WTC11 (cell line): ENCODE measurements at regions of chr3 and their contacts with region 1.

Region 1: DNA sequence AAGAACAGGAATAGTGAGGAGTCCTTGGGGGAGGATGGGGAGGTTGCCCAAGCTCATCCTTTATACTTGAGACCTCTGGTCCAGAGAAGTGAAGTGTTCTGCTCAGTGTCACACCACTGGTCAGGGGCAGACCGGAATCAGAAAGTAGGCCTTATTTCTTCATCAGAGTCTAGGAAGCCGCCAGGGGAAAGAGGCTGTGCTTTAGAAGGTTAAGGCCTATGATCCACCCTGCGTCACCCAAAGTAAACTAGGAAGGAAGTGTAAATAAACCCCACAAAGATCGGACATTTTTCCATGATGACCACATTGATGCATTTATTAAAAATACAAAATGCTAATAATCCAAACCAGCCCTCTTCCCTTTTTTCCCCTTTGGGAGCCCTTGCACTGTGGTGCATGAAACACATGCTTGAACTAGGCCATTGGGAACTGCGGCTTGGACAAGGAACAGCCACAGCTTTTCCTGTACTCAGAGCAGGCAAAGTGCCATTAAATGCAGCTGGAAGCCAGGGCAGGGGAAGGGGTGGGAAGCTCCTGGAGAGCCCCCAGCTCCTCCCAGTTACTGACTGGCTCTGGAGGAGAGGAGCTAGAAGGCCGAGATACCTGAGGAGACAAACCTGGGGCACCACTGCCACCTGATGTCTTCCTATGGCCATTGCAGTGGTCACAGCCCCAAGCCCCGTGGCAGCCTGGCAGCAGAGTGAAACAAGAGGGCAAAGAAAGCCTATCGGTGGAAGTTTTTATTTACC is 37.0 kb downstream of the CDC25A start:
- DNase-seq: peak; percentile 90
- ATAC-seq: peak; percentile 99
- H3K4me3 Mint-ChIP-seq: no peak overlapping the region
- H3K27ac Mint-ChIP-seq: no peak overlapping the region
- H3K4me1 Mint-ChIP-seq: peaks cover 7% of the 10 kb centered on the region
- H3K27me3 Mint-ChIP-seq: no peaks in the 10 kb centered on the region
- CTCF ChIP-seq: peak; percentile 69

Region 2: GRCh38 chr3:47824541-47825473 is 326.4 kb before region 1 on chr3:
- CTCF ChIA-PET with region 1: interaction called, 23 read pairs
- POLR2A ChIA-PET with region 1: no interaction called
- DNase-seq: peak; percentile 82
- ATAC-seq: peak; percentile 99
- H3K4me3 Mint-ChIP-seq: peak overlapping the region; percentile 94
- H3K27ac Mint-ChIP-seq: peak overlapping the region; percentile 91
- H3K4me1 Mint-ChIP-seq: peaks cover 11% of the 10 kb centered on the region
- H3K27me3 Mint-ChIP-seq: no peaks in the 10 kb centered on the region
- CTCF ChIP-seq: peak; percentile 41; the same call in 1 of the 2 replicates

Region 3: GRCh38 chr3:47859956-47860605 is 291.2 kb before region 1 on chr3:
- CTCF ChIA-PET with region 1: interaction called, 30 read pairs
- POLR2A ChIA-PET with region 1: no interaction called
- DNase-seq: no peak
- ATAC-seq: no peak
- H3K4me3 Mint-ChIP-seq: no peak overlapping the region
- H3K27ac Mint-ChIP-seq: no peak overlapping the region
- H3K4me1 Mint-ChIP-seq: no peaks in the 10 kb centered on the region
- H3K27me3 Mint-ChIP-seq: no peaks in the 10 kb centered on the region
- CTCF ChIP-seq: no peak

Region 4: DNA sequence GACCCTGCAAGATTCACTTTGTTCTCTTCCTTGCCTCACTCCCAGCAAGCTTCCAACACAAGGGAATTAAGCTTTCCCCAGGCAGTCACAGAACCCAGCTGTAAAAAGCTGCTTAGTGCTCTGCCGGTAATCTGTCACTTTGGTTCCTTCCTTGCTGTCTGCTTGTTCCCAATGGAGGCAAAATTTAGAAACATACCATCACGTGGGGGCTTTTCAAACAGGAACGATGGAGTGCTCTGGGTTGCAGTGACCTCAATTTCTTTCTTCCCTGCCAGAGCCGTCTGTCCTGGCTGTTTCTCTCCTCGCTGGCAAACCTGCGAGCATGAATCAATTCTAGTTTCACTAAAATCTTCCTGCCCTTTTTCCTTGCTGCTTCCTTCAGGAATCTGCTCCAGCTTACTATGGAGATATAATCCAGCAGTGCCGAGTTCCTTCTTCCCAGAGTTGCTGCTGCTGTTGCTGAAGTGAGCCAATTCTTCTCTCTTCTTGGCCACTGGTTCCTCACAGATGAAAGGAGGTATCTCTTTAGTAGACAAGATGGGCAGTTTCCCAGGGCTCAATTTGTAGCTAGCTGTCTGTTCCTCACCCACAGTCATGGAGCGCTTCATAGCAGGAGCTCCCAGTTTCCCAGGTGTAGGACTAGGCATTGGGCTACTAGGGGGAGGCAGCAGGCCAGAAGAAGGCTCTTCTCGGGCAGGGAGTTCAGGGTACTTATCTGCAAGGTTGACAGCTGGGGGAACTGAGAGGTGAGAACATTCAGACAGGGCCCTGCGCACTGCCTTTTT is 260.2 kb before region 1 on chr3:
- CTCF ChIA-PET with region 1: interaction called, 30 read pairs
- POLR2A ChIA-PET with region 1: no interaction called
- DNase-seq: no peak
- ATAC-seq: peak; percentile 20; the same call in 1 of the 2 replicates
- H3K4me3 Mint-ChIP-seq: no peak overlapping the region
- H3K27ac Mint-ChIP-seq: peak overlapping the region; percentile 76
- H3K4me1 Mint-ChIP-seq: peaks cover 50% of the 10 kb centered on the region
- H3K27me3 Mint-ChIP-seq: no peaks in the 10 kb centered on the region
- CTCF ChIP-seq: no peak

Region 5: GRCh38 chr3:47996440-47996839 is 154.8 kb before region 1 on chr3:
- CTCF ChIA-PET with region 1: interaction called, 14 read pairs
- POLR2A ChIA-PET with region 1: no interaction called
- DNase-seq: no peak
- ATAC-seq: no peak
- H3K4me3 Mint-ChIP-seq: no peak overlapping the region
- H3K27ac Mint-ChIP-seq: no peak overlapping the region; the same call in none of the 2 replicates
- H3K4me1 Mint-ChIP-seq: peaks cover 17% of the 10 kb centered on the region
- H3K27me3 Mint-ChIP-seq: no peaks in the 10 kb centered on the region
- CTCF ChIP-seq: no peak

Region 6: DNA sequence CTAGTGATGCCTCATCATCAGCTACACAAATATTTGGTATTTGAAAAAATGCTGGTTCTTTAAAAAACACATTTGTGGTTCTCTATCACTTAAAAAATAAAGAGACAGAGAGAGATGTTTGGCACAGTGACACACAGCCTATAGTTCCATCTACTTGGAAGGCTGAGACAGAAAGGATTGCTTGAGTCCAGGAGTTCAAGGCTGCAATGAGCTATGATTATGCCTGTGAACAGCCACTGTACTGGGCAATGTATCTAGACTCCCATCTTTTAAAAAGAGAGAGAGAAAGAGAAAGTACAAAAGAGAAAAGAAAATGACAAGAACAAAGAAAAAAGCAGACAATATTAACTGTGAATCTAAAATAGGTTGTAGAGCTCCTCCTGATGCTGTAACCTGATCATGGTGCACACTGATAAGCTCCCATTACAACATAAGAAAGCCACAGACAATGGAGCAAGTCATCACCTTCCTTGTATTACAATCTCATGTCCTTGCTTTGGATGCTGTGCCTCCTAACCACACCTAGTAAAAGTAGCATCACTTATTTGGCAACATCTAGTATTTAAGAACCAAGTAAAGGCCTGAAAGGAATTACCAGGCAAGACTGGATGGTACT is 103.3 kb before region 1 on chr3:
- CTCF ChIA-PET with region 1: interaction called, 14 read pairs
- POLR2A ChIA-PET with region 1: no interaction called
- DNase-seq: no peak
- ATAC-seq: no peak
- H3K4me3 Mint-ChIP-seq: no peak overlapping the region
- H3K27ac Mint-ChIP-seq: no peak overlapping the region
- H3K4me1 Mint-ChIP-seq: peaks cover 8% of the 10 kb centered on the region
- H3K27me3 Mint-ChIP-seq: no peaks in the 10 kb centered on the region
- CTCF ChIP-seq: no peak

Region 7: DNA sequence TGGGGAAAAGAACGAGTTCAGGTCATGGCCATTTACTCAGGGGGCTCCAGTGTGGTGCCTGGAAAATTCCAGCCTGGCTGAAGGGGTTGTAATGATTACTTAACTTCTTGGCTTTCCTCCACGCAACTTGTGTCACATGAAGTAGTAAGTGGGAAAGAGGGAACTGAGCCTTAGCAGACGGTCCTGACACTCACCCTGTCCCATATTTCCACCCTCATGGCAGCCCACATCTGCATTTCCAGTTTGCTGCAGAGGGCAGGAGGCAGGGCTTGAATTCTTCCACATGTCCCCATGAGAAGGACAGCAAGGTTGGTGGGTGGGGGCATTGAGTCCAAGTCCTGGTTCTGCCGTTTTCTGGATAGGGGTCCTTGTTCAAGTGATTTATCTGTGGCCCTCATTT is 64.2 kb after region 1 on chr3:
- CTCF ChIA-PET with region 1: no interaction called
- POLR2A ChIA-PET with region 1: no interaction called
- DNase-seq: no peak
- ATAC-seq: no peak
- H3K4me3 Mint-ChIP-seq: no peak overlapping the region
- H3K27ac Mint-ChIP-seq: no peak overlapping the region
- H3K4me1 Mint-ChIP-seq: no peaks in the 10 kb centered on the region
- H3K27me3 Mint-ChIP-seq: peaks cover 3% of the 10 kb centered on the region; the same call in 1 of the 2 replicates
- CTCF ChIP-seq: no peak

Region 8: GRCh38 chr3:48439820-48440589 is 288.8 kb after region 1 on chr3 and contains the starts of genes CCDC51 and TMA7:
- CTCF ChIA-PET with region 1: no interaction called
- POLR2A ChIA-PET with region 1: no interaction called
- DNase-seq: peak; percentile 99
- ATAC-seq: peak; percentile 95
- H3K4me3 Mint-ChIP-seq: peak within 1 kb of the TSS; percentile 99
- H3K27ac Mint-ChIP-seq: peak within 1 kb of the TSS; percentile 99
- H3K4me1 Mint-ChIP-seq: peaks cover 17% of the 10 kb centered on the region
- H3K27me3 Mint-ChIP-seq: no peaks in the 10 kb centered on the region
- CTCF ChIP-seq: no peak
- total RNA-seq, gene CCDC51: 23.9 to 25.1 TPM (median 24.7 TPM) in 3 replicates
- total RNA-seq, gene TMA7: 281 to 318 TPM (median 285 TPM) in 3 replicates